ENCODE measurements at regions of chr2 and their contacts with region 1.

Region 1: GRCh38 chr2:217054791-217055190 is 194.9 kb upstream of the TNP1 start:
- DNase-seq: peak in 1 of 2 donors; percentile 73
- ATAC-seq: no peak
- H3K4me3 ChIP-seq: no peak overlapping the region
- H3K27ac ChIP-seq: peak overlapping the region; percentile 95 to 96
- H3K4me1 ChIP-seq: peaks cover 6 to 12% of the 10 kb centered on the region in 2 donors
- H3K27me3 ChIP-seq: no peaks in the 10 kb centered on the region

Region 2: DNA sequence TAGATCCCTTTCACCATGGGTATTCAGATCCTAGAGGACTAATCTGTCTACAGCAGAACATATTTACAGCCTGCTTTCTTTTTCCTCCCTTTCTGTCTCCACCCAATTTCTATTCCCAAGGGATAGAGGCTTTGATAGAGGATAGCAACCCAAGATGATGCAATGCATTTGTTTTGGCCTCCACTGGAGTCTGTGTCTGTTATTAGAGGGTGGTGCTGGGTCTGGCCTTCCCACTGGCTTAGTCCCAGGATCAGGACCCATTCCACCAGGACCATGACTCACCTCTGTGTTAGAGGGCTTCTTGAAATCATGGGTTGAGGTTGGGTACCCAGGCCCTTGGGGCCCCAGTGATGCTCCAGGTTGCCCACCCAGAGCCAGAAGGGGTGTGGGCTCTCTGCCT is 44.8 kb after region 1 on chr2:
- intact Hi-C with region 1: loop called in 1 of 2 experiments (anchors 5 kb)
- DNase-seq: peak; percentile 71 to 75
- ATAC-seq: peak; percentile 90
- H3K4me3 ChIP-seq: no peak overlapping the region
- H3K27ac ChIP-seq: no peak overlapping the region
- H3K4me1 ChIP-seq: peaks cover 0 to 3% of the 10 kb centered on the region in 2 donors
- H3K27me3 ChIP-seq: peaks cover 0 to 2% of the 10 kb centered on the region in 2 donors

Region 3: DNA sequence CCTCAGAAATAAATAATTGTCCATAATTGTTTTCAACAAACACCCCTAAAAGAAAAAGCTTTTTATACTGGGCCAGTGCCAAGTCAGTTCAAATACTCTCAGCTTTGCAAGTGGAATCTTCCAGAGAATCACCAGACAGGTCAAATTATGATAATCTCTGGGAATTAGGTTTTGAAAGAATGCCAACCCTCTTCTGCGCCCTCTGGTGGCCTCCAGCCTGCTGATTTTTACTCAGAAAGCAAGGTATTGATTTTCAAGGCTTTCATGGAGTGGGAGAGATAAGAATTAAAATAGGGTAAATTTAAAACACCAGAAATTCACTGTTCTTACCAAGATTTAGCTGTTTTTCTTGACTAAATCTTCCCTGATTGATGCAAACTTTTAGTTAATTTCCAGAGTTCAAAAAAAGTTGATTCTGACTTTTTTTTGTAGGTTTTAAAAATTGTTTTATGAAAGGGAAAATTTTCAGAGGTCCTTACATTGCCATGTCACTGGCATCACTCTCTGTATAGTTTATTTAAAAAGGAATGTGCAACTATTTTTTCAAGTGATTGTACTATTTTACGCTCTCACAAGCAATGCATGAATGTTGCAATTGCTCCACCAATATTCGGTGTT is 88.0 kb after region 1 on chr2:
- intact Hi-C with region 1: no loop called
- DNase-seq: no peak
- ATAC-seq: no peak
- H3K4me3 ChIP-seq: no peak overlapping the region
- H3K27ac ChIP-seq: no peak overlapping the region
- H3K4me1 ChIP-seq: no peaks in the 10 kb centered on the region
- H3K27me3 ChIP-seq: no peaks in the 10 kb centered on the region

Measured in aorta (tissue), 5 donors.